Activated naive CD8-positive, alpha-beta T cell treated with anti-CD3 and anti-CD28 coated beads, Interleukin-2, amount 10 ng/mL, durations not matched to agents 7 days and 5 days (primary cell): ENCODE measurements at regions of chr11 and their contacts with region 1.

Region 1: GRCh38 chr11:6402561-6402981 is 12.3 kb downstream of the SMPD1 start:
- DNase-seq: peak; percentile 70
- ATAC-seq: peak; percentile 90
- H3K4me3 Mint-ChIP-seq: peak overlapping the region; percentile 83
- H3K27ac Mint-ChIP-seq: peak overlapping the region; percentile 94
- H3K4me1 Mint-ChIP-seq: peaks cover 56% of the 10 kb centered on the region
- H3K27me3 Mint-ChIP-seq: no peaks in the 10 kb centered on the region

Region 2: GRCh38 chr11:6357222-6357621 is 45.3 kb before region 1 on chr11:
- POLR2A ChIA-PET with region 1: no interaction called
- DNase-seq: no peak
- ATAC-seq: no peak
- H3K4me3 Mint-ChIP-seq: no peak overlapping the region
- H3K27ac Mint-ChIP-seq: no peak overlapping the region
- H3K4me1 Mint-ChIP-seq: peaks cover 5% of the 10 kb centered on the region
- H3K27me3 Mint-ChIP-seq: peaks cover 4% of the 10 kb centered on the region

Region 3: GRCh38 chr11:6389921-6390724 is 12.4 kb before region 1 on chr11 and contains the start of gene SMPD1:
- POLR2A ChIA-PET with region 1: interaction called, 140 read pairs
- DNase-seq: peak; percentile 92
- ATAC-seq: peak; percentile 86
- H3K4me3 Mint-ChIP-seq: peak within 1 kb of the TSS; percentile 96
- H3K27ac Mint-ChIP-seq: peak within 1 kb of the TSS; percentile 95
- H3K4me1 Mint-ChIP-seq: peaks cover 39% of the 10 kb centered on the region
- H3K27me3 Mint-ChIP-seq: no peaks in the 10 kb centered on the region
- total RNA-seq, gene SMPD1: 40.7 to 42.6 TPM

Region 4: DNA sequence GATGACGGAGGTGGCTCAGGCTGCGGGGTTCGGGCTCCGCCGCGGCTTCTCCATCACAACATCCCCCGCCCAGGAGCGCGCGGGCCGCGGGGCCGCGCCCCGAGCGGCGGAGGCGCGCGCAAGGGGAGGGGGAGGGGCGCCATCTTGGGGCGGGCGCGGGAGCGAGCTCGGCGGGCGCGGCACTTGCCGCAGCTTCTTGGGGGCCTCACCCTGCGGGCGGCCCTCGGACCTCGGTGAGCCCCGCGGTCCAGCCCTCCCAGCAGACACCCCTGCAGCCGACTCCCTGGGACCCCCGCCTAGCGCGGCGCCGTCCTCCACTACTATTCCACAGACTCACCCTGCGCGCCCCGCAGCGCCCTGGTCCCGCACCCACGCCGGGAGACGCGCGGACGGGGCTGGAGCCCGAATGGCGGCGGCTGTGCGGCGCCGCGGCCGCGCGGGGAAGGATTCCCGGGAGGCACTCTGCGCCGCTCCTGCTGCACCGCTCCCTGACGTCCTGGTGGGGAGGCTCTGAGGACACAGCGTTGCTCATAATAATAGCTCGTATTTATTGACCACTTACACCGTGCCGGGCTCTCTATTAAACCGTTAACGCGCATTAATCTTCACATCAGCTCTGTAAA is 16.5 kb after region 1 on chr11 and contains the start of gene APBB1:
- POLR2A ChIA-PET with region 1: interaction called, 116 read pairs
- DNase-seq: peak; percentile 87
- ATAC-seq: peak; percentile 64
- H3K4me3 Mint-ChIP-seq: peak within 1 kb of the TSS; percentile 76
- H3K27ac Mint-ChIP-seq: peak within 1 kb of the TSS; percentile 43
- H3K4me1 Mint-ChIP-seq: peaks cover 7% of the 10 kb centered on the region
- H3K27me3 Mint-ChIP-seq: peaks cover 32% of the 10 kb centered on the region
- total RNA-seq, gene APBB1: 64.0 to 69.2 TPM

Region 5: GRCh38 chr11:6443269-6444003 is 40.9 kb after region 1 on chr11:
- POLR2A ChIA-PET with region 1: interaction called, 12 read pairs
- DNase-seq: peak; percentile 67
- ATAC-seq: peak; percentile 51
- H3K4me3 Mint-ChIP-seq: no peak overlapping the region
- H3K27ac Mint-ChIP-seq: no peak overlapping the region
- H3K4me1 Mint-ChIP-seq: no peaks in the 10 kb centered on the region
- H3K27me3 Mint-ChIP-seq: peaks cover 8% of the 10 kb centered on the region

Region 6: DNA sequence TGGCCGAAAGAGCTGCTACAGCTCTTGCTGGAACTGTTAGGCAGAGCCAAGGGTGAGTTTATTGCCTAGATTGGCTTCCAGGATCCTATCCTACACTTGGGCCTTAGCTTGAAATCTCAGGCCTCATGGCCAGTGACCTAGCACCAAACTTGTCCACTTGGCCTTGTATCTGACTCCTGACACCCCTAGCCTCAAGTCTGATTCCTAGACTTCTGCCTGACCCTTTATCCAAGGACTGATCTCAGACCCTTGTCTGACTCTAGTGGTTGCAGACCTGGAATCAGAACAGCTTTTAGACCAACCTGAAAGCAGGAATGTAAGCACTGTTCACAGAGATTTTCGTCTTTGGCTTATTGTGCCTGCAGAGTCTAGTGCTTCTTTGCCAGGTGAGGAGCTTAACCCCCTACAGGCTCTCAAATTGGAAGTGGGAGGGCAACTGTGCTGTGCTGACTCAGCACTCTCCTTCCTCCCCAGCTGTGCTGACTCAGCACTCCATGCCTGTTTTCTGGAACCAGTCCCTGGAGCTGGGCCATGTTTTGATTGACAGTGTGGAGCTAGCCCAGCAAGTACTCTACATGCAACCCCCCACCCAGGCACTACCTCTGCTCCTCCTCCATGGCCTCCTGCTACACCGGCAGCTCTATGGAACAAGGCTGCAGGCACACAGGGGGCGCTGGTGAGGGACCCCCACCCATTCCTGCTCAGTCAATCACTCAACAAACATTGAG is 165.8 kb after region 1 on chr11:
- POLR2A ChIA-PET with region 1: no interaction called
- DNase-seq: no peak
- ATAC-seq: no peak
- H3K4me3 Mint-ChIP-seq: no peak overlapping the region
- H3K27ac Mint-ChIP-seq: no peak overlapping the region
- H3K4me1 Mint-ChIP-seq: peaks cover 3% of the 10 kb centered on the region
- H3K27me3 Mint-ChIP-seq: no peaks in the 10 kb centered on the region